ENCODE measurements at regions of chr1 and their contacts with region 1.

Region 1: GRCh38 chr1:50829014-50829958 is 130.8 kb downstream of the FAF1 start:
- DNase-seq: no peak
- ATAC-seq: peak; percentile 86

Region 2: GRCh38 chr1:50978144-50978851 is 149.0 kb after region 1 on chr1:
- intact Hi-C with region 1: loop called (anchors 5 kb)
- DNase-seq: peak; percentile 81
- ATAC-seq: peak; percentile 82

Measured in Right ventricle myocardium inferior (tissue), 1 donor.